HEK293T (cell line): ENCODE measurements at regions of chr1 and their contacts with region 1.

Region 1: DNA sequence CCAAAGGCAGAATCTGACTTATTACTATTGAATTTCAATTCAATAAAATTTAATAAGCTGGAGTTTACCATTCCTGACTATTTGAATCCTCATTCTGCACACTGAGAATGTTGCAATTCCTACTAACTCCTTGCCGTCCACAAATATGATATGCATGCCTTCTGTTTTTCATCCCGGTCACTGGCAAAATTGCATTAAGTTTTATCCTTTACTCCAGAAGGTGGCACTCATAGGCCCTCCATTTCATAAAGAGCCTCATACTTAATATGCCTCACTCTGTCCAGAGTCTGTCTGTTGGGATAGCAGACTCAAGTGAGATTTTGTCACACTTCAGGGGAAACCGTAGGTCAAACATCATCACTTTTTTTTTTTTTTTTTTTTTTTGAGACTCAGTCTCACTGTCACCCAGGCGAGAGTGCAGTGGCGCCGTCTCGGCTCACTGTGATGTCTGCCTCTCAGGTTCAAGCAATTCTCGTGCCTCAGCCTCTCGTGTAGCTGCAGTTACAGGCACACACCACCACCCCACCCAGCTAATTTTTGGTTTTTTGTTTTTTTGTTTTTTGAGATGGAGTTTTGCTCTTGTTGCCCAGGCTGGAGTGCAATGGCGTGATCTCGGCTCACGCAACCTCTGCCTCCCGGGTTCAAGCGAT is 27.3 kb downstream of the F11R start:
- DNase-seq: no peak

Region 2: DNA sequence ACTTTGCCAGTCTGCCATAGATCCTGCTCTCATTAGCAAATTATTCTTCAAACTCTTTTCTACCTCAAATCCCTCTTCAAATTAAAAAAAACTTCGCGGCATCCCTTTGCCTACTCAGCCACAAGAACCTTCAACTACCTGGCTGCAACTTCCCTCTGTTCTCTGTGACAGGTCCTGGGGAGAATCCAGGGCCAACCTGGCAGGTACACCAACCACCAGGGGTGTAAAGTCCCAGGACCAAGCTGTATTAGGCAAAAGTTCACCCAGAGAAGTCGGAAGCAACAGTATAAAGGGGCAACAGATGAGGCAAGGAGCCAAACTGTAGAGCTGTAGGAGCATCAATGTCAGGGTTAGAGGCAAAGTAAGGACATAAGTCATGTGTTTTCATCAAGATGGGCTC is 20.7 kb before region 1 on chr1:
- CTCF ChIA-PET with region 1: interaction called, 10 read pairs
- POLR2A ChIA-PET with region 1: no interaction called
- DNase-seq: no peak

Region 3: GRCh38 chr1:160981584-160982411 is 11.9 kb before region 1 on chr1:
- CTCF ChIA-PET with region 1: interaction called, 10 read pairs
- POLR2A ChIA-PET with region 1: no interaction called
- DNase-seq: no peak

Region 4: DNA sequence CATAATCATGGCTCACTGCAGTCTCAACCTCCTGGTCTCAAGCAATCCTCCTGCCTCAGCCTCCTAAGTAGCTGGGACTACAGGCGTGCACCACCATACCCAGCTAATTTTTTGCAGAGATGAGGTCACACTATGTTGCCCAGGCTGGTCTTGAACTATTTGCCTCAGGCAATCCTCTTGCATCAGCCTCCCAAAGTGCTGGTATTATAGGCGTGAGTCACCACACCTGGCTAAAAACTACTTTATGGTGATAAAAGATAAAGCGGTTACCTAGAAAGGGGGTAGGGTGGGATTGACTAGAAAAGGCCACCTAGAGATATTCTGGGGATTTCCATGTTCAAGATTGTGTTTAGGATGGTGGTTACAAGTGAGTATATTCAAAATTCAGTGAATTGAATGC is 40.1 kb after region 1 on chr1:
- CTCF ChIA-PET with region 1: no interaction called
- POLR2A ChIA-PET with region 1: no interaction called
- DNase-seq: no peak

Region 5: DNA sequence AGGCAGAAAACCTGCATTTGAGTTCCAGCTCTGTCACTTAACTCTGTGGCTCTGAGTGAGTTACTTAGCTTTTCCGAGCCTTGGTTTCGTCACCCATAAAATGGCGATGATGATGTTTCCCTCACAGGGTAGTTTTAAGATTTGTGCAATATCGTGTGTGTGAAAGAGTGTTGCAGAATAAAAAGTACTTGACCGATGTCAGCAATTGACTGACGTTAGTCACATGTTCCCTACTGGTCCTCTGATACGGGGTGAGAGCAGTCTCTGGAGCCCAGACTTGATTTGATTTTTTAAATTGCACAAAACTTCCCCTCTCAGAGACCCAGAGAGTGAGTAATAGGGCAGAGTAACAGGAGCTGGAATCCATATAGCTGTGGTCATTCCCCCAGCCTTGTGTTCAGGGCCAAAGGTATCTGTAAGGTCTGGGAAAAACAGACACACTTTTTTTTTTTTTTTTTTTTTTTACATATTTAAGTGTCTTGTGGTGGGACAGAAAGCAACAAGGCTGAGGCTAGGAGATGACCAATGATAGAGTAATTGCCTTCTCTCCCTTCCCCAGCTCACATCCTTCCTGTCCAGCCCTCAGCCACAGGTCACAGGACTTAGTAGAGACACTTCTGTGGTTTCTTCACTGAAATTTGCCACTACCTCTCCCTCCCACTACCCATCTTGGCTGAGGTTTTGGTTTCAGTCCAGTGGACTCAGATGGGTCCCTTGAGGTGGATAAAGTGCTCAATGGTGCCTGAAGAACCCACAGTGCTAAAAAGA is 223.5 kb after region 1 on chr1:
- CTCF ChIA-PET with region 1: no interaction called
- POLR2A ChIA-PET with region 1: no interaction called
- DNase-seq: no peak